ENCODE measurements at regions of chr18 and their contacts with region 1.

Region 1: DNA sequence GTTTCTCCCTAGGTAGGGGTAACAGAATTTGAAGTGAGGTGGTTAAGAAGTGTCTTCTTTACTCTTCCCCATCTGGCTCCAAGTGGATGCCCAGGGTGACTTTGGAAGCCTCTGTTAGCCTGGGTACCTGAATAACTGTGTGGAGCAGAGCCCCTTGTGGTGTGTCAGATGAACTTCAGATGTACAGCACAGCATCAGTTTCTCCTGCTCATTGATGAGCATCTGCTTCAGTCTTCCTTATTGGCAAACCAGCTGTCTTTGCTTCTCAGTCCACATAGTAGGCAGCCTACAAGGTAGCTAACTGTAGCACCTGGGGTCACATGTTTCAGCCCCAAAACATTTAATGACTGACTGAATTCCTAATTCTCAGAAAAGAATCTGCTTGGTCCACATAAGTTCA is 56.2 kb upstream of the ATP8B1 start:
- DNase-seq: peak; percentile 40
- H3K4me3 ChIP-seq: no peak overlapping the region
- H3K27ac ChIP-seq: no peak overlapping the region
- H3K4me1 ChIP-seq: no peaks in the 10 kb centered on the region
- H3K27me3 ChIP-seq: no peaks in the 10 kb centered on the region
- CTCF ChIP-seq: peak; percentile 83 to 85

Region 2: GRCh38 chr18:57630002-57630753 is 229.1 kb before region 1 on chr18:
- CTCF ChIA-PET with region 1: no interaction called
- dilution Hi-C with region 1: no loop called
- in situ Hi-C with region 1: no loop called
- intact Hi-C with region 1: loop called (anchors 5 kb)
- DNase-seq: peak; percentile 93
- H3K4me3 ChIP-seq: peak overlapping the region; percentile 64 to 79 (median 68)
- H3K27ac ChIP-seq: peak overlapping the region; percentile 45
- H3K4me1 ChIP-seq: peaks cover 14% of the 10 kb centered on the region
- H3K27me3 ChIP-seq: no peaks in the 10 kb centered on the region
- CTCF ChIP-seq: peak; percentile 53 to 82